Endothelial cell of umbilical vein (primary cell): ENCODE measurements at regions of chr13 and their contacts with region 1.

Region 1: GRCh38 chr13:36346222-36347083 is at the start of gene SPART:
- DNase-seq: peak; percentile 93
- H3K4me3 ChIP-seq: peak within 1 kb of the TSS; percentile 59 to 89 (median 85)
- H3K27ac ChIP-seq: peak within 1 kb of the TSS; percentile 85
- H3K4me1 ChIP-seq: peaks cover 14% of the 10 kb centered on the region
- H3K27me3 ChIP-seq: no peaks in the 10 kb centered on the region
- CTCF ChIP-seq: peak; percentile 97 to 99
- POLR2A ChIP-seq: no peak
- total RNA-seq, gene SPART: 73.6 and 74.1 TPM in 2 replicates

Region 2: GRCh38 chr13:36251526-36251925 is 94.9 kb before region 1 on chr13:
- CTCF ChIA-PET with region 1: no interaction called
- POLR2A ChIA-PET with region 1: no interaction called
- dilution Hi-C with region 1: no loop called
- intact Hi-C with region 1: no loop called
- DNase-seq: no peak
- H3K4me3 ChIP-seq: no peak overlapping the region
- H3K27ac ChIP-seq: no peak overlapping the region
- H3K4me1 ChIP-seq: no peaks in the 10 kb centered on the region
- H3K27me3 ChIP-seq: no peaks in the 10 kb centered on the region
- CTCF ChIP-seq: no peak
- POLR2A ChIP-seq: no peak

Region 3: DNA sequence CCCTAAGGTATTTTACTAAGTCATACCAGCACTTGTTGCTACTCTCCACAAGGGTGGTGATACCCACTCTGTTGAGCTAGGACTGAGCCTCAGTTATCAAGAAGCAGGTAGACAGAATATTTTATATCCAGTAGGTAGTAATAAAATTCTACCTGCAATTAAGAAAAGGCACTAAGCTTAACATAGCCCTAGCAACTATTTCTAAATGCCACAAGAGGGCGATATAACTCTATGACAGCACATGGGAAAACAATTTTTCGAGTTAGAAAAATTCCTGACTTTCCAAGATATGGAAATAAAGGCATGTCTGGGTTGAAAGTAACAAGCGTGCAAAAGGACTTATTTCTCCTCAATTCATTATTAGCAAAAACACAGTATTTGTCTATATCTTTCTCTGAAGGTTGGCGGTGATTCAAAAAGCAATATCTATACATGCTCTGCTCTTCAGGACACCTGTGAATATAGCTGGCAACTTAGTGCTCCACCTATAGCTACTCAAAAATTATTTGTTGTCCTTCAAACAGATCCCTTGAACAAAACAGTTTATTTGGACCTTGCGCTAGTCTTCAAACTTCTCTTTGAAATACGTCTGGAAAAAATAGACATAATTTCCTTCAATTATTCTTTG is 63.5 kb before region 1 on chr13:
- CTCF ChIA-PET with region 1: interaction called, 29 read pairs
- POLR2A ChIA-PET with region 1: no interaction called
- dilution Hi-C with region 1: no loop called
- intact Hi-C with region 1: loop called (anchors 1 kb)
- DNase-seq: peak; percentile 61
- H3K4me3 ChIP-seq: no peak overlapping the region
- H3K27ac ChIP-seq: no peak overlapping the region
- H3K4me1 ChIP-seq: no peaks in the 10 kb centered on the region
- H3K27me3 ChIP-seq: no peaks in the 10 kb centered on the region
- CTCF ChIP-seq: peak; percentile 52 to 53
- POLR2A ChIP-seq: no peak

Region 4: DNA sequence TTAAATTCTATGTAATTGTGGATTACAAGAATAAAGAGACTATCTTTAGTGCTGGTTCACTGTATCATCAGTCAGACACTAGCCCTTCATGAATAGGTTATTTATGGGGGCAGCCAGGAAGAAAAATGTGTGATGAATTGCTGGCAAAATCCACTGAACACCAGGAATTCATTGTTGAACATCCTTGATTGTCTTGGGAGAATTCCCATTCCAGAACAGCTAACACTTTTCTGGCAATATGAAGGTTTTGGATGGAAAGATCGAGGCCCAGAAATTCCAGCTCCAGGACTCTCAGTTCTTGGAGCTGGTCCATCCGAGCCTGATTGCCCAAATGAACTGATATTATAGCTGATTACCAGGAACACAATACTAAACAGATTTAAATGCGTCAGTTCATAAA is 11.2 kb after region 1 on chr13:
- CTCF ChIA-PET with region 1: interaction called, 16 read pairs
- POLR2A ChIA-PET with region 1: no interaction called
- dilution Hi-C with region 1: no loop called
- intact Hi-C with region 1: no loop called
- DNase-seq: no peak
- H3K4me3 ChIP-seq: no peak overlapping the region
- H3K27ac ChIP-seq: no peak overlapping the region
- H3K4me1 ChIP-seq: no peaks in the 10 kb centered on the region
- H3K27me3 ChIP-seq: no peaks in the 10 kb centered on the region
- CTCF ChIP-seq: no peak
- POLR2A ChIP-seq: no peak

Region 5: DNA sequence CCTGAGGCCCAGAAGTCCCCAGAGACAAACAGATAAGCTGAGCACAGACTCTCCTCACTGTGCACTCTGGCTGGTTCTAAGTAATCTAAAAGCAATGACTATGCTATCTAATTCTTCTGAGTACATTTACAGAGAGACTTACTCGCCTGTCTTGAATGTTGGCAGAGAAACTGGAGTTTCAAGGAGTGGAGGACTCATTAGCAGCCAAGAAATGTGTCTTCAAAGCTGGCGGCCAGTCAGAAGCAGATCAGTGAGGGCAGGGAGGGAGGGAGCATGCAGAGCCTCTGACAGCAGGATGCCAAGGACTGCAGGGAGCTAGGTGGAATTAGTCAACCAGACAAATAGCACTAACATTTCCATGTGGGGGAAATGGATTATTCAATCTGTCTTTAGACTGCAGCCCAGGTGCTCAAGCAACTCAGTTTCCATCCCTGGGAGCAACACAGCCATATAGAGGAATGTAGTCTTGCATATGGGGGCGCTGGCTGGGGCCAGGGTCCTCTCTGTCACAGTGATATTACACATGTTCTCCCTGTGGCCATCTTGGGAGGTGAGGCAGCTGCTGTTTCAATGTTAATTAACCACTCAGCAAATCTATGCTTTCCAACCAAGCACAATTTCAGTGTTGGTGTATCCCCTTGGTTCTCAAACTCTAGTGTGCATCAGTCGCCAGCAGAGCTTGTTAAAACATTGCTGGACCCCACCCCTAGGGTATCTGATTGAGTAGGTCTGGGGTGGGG is 183.8 kb after region 1 on chr13:
- CTCF ChIA-PET with region 1: interaction called, 3 read pairs
- POLR2A ChIA-PET with region 1: no interaction called
- dilution Hi-C with region 1: no loop called
- intact Hi-C with region 1: loop called (anchors 2 kb)
- DNase-seq: peak; percentile 20
- H3K4me3 ChIP-seq: no peak overlapping the region
- H3K27ac ChIP-seq: no peak overlapping the region
- H3K4me1 ChIP-seq: peaks cover 47% of the 10 kb centered on the region
- H3K27me3 ChIP-seq: no peaks in the 10 kb centered on the region
- CTCF ChIP-seq: no peak
- POLR2A ChIP-seq: no peak

Region 6: GRCh38 chr13:36981156-36981743 is 634.8 kb after region 1 on chr13:
- CTCF ChIA-PET with region 1: interaction called, 10 read pairs
- POLR2A ChIA-PET with region 1: no interaction called
- dilution Hi-C with region 1: no loop called
- intact Hi-C with region 1: no loop called
- DNase-seq: peak; percentile 75
- H3K4me3 ChIP-seq: no peak overlapping the region
- H3K27ac ChIP-seq: no peak overlapping the region
- H3K4me1 ChIP-seq: no peaks in the 10 kb centered on the region
- H3K27me3 ChIP-seq: no peaks in the 10 kb centered on the region
- CTCF ChIP-seq: peak; percentile 33 to 37
- POLR2A ChIP-seq: no peak